Cardiac septum (tissue), 1 donor: ENCODE measurements at regions of chr12 and their contacts with region 1.

Region 1: DNA sequence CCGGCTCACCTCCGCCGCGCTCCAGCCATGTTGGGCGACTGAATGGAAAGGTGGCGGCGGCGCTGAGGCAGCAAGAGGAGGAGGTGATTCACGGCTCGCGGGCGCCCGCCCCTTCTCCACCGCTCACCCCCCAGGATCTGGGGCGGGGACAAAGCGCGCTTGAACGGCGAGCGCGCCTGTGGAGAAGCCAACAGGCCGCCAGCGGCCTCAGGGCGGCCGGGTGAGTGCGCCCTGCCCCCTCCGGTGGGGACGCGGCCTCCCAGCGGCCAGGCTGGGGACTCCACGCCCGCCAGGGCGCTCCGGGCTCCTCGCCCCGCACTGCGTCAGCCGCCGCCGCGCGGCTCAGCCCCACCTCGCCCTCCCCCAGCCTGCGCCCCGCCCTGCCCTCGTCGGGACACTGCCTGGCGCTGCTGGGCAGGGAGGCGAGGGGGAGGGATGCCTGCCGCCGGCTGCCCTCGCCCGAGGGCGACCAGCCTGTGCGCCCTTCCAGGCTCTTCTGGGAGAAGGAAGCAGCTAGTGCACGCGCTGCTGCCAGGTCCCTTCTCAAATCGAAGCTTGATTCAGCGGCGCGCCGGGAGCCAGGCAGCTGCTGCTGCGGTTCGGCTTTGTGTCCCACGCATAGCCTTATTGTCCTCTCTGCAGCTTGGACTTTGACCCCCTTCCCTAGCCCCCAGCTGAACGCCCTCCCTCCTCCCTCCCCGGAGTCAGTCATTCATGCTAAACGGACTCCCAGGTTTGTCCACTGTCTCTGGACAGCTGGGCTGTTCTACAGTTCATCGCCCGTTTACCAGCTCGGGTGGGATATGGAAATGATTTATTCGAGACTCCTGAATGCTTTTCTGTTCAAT is at the start of gene KIF21A:
- DNase-seq: peak; percentile 90
- total RNA-seq, gene KIF21A: 52.7 TPM

Region 2: GRCh38 chr12:39012870-39013269 is 430.4 kb before region 1 on chr12:
- intact Hi-C with region 1: no loop called
- DNase-seq: no peak

Region 3: DNA sequence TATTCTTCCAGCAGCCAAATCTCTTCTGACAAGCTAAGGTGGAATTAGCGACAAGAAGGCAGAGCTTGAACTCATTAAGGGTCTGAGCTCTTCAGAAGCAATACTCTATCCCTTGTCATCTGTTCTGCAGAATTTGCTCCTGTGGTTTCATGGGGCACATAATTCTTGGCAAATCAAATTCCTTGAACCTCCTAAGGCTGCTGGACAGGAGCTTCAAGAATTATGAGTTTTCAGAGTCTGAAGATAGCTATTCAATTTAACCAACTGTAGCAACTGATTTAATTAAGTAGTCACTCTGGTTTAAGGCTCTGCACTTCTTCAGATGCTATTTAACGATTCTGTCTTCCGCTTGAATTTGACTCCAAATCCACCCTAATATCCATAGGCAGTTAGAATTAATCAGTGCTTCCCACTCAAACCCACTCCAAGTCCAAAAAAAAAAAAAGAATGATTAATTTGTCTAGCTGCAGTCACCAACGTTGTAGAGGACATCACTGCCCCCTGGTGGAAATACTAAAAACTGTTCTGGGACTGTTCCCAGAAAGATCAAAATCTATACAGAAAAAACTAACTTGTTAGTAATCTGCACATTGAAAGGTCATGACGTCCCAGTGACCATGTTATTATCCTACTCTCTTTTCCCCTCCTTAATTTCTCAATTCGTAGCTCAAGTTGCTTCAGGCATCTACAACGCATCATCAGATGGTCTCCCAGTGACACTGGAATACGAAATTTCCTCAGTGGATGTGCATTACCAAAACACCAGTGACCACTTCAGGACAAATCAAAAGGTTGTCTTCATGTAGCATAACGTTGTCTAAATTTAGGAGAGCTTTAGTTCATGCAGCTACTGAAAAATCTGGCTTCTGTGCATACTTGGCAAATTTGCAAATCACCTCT is 170.2 kb before region 1 on chr12:
- intact Hi-C with region 1: no loop called
- DNase-seq: no peak

Region 4: GRCh38 chr12:39300799-39301198 is 142.5 kb before region 1 on chr12:
- intact Hi-C with region 1: no loop called
- DNase-seq: no peak

Region 5: GRCh38 chr12:39372929-39373328 is 70.4 kb before region 1 on chr12:
- intact Hi-C with region 1: loop called (anchors 5 kb)
- DNase-seq: no peak

Region 6: DNA sequence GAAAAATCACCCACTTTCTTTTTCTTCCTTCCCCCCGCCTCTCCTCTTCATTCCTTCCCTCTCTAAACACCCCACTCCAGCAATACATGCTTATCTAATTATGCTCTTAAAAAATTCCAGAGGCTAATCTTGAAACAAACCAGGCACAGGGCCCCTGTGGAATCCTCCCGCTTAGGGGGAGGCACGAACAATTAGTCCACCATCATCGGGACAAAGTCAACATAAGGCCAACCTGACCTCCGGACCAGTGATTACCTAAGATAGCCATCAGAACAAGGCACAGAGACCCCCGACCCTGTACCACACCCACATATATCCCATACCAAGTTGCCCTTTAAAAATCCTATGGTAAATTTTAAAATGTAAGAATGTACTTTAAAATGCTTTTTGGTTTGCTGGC is 47.4 kb before region 1 on chr12:
- intact Hi-C with region 1: loop called (anchors 5 kb)
- DNase-seq: no peak

Region 7: GRCh38 chr12:39619660-39620433 is 176.5 kb after region 1 on chr12 and contains the start of gene ABCD2:
- intact Hi-C with region 1: loop called (anchors 2 kb)
- DNase-seq: peak; percentile 77
- total RNA-seq, gene ABCD2: 3.0 TPM